AG04450 (cell line): ENCODE measurements at regions of chr15 and their contacts with region 1.

Region 1: GRCh38 chr15:51380999-51381795 is 39.7 kb downstream of the GLDN start:
- DNase-seq: peak; percentile 11
- H3K4me3 ChIP-seq: no peak overlapping the region
- H3K27ac ChIP-seq: no peak overlapping the region
- H3K27me3 ChIP-seq: peaks cover 18% of the 10 kb centered on the region
- CTCF ChIP-seq: peak; percentile 96

Region 2: DNA sequence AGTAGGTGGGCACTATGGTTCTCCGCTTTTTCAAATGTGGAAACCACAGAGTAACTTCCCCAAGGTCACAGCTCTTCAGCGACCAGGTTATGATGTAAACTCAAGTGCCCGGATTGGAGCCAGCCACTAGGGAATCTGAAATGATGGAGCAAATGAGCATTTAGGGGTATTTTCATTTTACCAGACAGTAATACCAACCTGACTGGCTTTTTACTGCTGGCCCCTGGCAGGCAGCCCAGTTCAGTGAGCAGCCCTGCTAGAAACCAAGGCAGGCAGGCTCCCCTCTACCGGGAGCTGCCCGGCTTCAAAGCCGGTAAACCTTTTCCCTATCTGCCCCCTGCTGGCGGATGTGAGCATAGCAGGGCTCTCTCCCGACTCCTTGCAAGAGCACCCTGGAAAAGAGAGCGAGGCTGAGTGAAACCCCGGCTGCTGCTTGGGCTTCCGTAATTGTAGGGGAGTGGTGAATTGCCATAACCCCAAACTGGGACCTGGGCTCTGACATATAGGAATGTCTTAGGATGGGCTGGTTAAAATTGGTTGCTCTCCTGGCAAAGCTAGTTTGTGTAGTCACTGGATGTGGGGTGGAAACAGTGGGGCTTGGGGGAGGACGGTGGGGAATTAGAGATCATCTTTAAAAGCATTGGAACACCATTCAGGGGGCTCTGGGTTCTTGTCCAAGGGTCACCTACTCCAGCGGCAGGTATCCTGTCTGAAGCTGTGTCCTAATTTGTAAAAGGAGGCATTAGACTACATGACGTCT is 188.5 kb before region 1 on chr15:
- CTCF ChIA-PET with region 1: interaction called, 14 read pairs
- POLR2A ChIA-PET with region 1: no interaction called
- DNase-seq: peak; percentile 68
- H3K4me3 ChIP-seq: no peak overlapping the region
- H3K27ac ChIP-seq: no peak overlapping the region
- H3K27me3 ChIP-seq: peaks cover 26% of the 10 kb centered on the region
- CTCF ChIP-seq: peak; percentile 97

Region 3: DNA sequence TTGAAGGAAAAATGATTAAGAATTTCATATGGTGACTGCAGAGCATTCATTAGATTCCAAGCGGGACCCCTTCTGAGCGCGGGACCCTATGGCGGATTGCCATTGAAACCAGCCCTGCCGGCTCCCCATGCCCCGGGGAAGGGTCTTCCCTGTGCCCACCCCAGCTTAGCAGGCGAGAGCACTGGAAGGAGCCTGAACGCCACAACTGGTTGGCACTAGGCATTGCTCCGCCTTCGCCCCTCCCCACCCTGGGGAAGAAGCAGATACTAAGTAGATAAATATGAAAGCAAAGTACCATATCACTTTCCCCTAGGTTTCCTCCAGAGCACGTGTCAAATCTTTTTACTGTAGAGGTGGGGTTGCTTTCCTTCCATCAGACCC is 113.5 kb before region 1 on chr15:
- CTCF ChIA-PET with region 1: interaction called, 29 read pairs
- POLR2A ChIA-PET with region 1: no interaction called
- DNase-seq: no peak
- H3K4me3 ChIP-seq: peak overlapping the region; percentile 57
- H3K27ac ChIP-seq: no peak overlapping the region
- H3K27me3 ChIP-seq: peaks cover 61% of the 10 kb centered on the region
- CTCF ChIP-seq: no peak

Region 4: DNA sequence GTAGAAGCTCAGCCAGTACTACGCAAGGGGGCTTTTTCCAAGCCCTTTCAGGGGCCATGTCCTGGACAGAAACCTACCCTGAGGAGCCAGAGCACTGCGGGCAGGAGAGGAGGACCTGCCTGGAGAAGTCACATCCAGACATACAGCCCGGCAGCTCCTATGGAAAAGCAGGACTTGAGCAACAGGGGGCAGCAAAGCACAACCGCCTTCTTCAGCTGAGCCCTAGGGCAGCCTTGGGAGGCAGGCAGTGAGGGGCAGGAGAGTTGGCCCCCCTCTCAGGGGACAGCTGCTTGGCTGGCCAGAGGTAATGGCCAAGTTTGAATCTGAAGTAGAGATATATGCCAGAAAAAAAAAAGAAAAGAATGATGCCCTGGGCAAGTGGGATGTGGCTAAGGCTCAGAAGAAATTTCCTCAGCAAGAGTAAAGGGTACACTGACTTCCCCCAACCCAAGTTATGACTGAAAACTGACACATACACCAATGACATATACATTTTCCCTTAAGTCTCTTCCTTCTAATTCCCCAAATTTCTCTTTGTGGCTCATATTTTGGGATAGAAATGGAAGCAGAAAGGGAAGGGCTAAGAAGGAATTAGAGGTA is 99.7 kb before region 1 on chr15:
- CTCF ChIA-PET with region 1: interaction called, 132 read pairs
- POLR2A ChIA-PET with region 1: no interaction called
- DNase-seq: no peak
- H3K4me3 ChIP-seq: no peak overlapping the region
- H3K27ac ChIP-seq: no peak overlapping the region
- H3K27me3 ChIP-seq: peaks cover 31% of the 10 kb centered on the region
- CTCF ChIP-seq: peak; percentile 88

Region 5: GRCh38 chr15:51356983-51357382 is 24.2 kb before region 1 on chr15:
- CTCF ChIA-PET with region 1: no interaction called
- POLR2A ChIA-PET with region 1: no interaction called
- DNase-seq: no peak
- H3K4me3 ChIP-seq: no peak overlapping the region
- H3K27ac ChIP-seq: no peak overlapping the region
- H3K27me3 ChIP-seq: peaks cover 19% of the 10 kb centered on the region
- CTCF ChIP-seq: no peak